ENCODE measurements at regions of chr1 and their contacts with region 1.

Region 1: DNA sequence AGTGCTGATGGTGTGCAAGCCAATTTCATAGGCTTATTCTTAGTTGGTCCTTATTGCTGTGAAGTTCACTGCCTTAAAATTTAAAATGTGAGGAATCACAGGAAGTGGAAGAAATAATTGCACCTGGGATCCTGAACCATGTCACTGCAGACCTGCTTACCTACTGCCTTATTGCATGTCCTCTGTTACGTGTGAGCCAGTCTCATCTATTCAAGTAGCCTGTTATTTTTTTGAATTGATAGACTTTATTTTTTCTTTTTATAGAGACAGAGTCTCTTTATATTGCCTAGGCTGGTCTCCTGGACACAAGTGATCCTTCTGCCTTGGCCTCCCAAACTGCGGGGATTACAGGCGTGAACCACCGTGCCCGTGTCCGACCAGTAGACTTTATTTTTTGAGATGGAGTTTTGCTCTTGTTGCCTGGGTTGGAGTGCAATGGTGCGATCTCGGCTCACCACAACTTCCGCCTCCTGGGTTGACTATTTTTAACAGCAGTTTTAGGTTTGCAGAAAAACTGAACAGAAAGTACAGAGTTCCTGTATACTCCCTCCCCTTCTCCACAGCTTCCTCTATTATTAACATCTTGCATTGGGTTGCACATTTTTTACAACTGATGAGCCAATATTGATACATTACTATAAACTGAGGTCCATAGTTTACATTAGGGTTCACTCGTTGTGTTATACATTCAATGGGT is 14.0 kb upstream of the DISC1 start:
- DNase-seq: peak; percentile 50
- H3K4me3 Mint-ChIP-seq: peak overlapping the region; percentile 69
- H3K27ac Mint-ChIP-seq: peak overlapping the region; percentile 92
- H3K4me1 Mint-ChIP-seq: peaks cover 55% of the 10 kb centered on the region
- H3K27me3 Mint-ChIP-seq: peaks cover 12% of the 10 kb centered on the region

Region 2: GRCh38 chr1:231487019-231487418 is 125.5 kb before region 1 on chr1:
- intact Hi-C with region 1: no loop called
- DNase-seq: no peak
- H3K4me3 Mint-ChIP-seq: no peak overlapping the region
- H3K27ac Mint-ChIP-seq: no peak overlapping the region
- H3K4me1 Mint-ChIP-seq: no peaks in the 10 kb centered on the region
- H3K27me3 Mint-ChIP-seq: peaks cover 13% of the 10 kb centered on the region

Region 3: DNA sequence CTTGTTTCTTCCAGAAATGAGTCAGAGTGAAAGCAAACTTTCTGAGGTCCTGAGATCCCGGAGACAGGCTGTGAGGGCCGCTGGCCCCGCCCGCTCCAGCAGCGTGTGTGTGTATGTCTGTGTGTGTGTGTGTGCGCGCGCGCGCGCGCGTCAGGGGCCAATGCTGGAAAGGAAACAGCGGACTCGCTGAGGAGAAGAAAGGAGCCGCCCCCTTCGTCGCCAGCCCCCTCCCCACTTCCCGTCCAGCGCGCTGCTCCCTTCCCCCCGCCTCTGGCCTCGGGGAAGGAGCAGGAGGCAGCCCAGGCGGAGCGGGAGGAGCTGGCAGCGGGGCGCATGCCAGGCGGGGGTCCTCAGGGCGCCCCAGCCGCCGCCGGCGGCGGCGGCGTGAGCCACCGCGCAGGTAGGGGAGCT is 14.0 kb after region 1 on chr1 and contains the start of gene DISC1:
- intact Hi-C with region 1: loop called (anchors 1 kb)
- DNase-seq: peak; percentile 68
- H3K4me3 Mint-ChIP-seq: peak within 1 kb of the TSS; percentile 86
- H3K27ac Mint-ChIP-seq: peak within 1 kb of the TSS; percentile 71
- H3K4me1 Mint-ChIP-seq: peaks cover 32% of the 10 kb centered on the region
- H3K27me3 Mint-ChIP-seq: peaks cover 21% of the 10 kb centered on the region
- total RNA-seq, gene DISC1: 3.3 and 3.4 TPM in 2 replicates